AG04450 (cell line): ENCODE measurements at regions of chr5 and their contacts with region 1.

Region 1: GRCh38 chr5:337563-338130 is 16.1 kb downstream of the AHRR start:
- DNase-seq: no peak
- H3K4me3 ChIP-seq: no peak overlapping the region
- H3K27ac ChIP-seq: peak overlapping the region; percentile 23
- H3K27me3 ChIP-seq: no peaks in the 10 kb centered on the region
- CTCF ChIP-seq: peak; percentile 59

Region 2: DNA sequence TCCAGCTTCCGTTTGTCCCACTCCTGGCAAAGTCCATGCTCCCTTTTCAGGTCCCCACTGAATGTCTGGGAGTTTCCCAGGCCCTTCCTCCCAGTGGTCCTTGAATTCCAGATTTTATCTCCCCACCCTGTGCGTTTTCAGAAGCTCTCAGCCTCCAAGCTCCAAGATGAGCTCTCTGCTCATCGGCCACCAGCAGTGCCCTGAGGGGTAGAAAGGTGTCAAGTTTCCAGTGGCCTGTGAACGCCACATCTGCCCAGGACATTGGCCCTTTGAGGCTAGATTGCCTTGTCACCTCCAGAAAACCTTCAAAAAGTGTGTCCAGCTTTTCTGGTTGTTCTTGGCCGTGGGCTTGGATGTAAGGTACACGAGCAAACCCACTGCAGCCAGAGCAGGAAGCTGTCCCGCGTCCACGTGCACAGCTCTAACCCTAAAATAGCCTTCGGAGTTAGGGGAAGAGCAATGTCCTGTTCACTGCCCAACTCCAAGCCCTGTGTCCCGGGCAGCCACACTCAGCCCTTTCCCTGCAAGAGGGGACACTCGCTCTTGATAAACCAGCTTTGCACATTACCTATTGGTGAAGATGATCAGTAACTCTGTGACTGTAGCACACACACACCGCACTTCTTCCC is 157.2 kb before region 1 on chr5:
- CTCF ChIA-PET with region 1: no interaction called
- POLR2A ChIA-PET with region 1: no interaction called
- DNase-seq: no peak
- H3K4me3 ChIP-seq: no peak overlapping the region
- H3K27ac ChIP-seq: no peak overlapping the region
- H3K27me3 ChIP-seq: peaks cover 12% of the 10 kb centered on the region
- CTCF ChIP-seq: no peak

Region 3: GRCh38 chr5:368183-369084 is 30.8 kb after region 1 on chr5:
- CTCF ChIA-PET with region 1: interaction called, 11 read pairs
- POLR2A ChIA-PET with region 1: interaction called, 3 read pairs
- DNase-seq: peak; percentile 89
- H3K4me3 ChIP-seq: no peak overlapping the region
- H3K27ac ChIP-seq: peak overlapping the region; percentile 94
- H3K27me3 ChIP-seq: no peaks in the 10 kb centered on the region
- CTCF ChIP-seq: no peak

Region 4: GRCh38 chr5:626850-627249 is 289.2 kb after region 1 on chr5:
- CTCF ChIA-PET with region 1: no interaction called
- POLR2A ChIA-PET with region 1: no interaction called
- DNase-seq: no peak
- H3K4me3 ChIP-seq: no peak overlapping the region
- H3K27ac ChIP-seq: no peak overlapping the region
- H3K27me3 ChIP-seq: no peaks in the 10 kb centered on the region
- CTCF ChIP-seq: no peak